ENCODE measurements at regions of chr11 and their contacts with region 1.

Region 1: DNA sequence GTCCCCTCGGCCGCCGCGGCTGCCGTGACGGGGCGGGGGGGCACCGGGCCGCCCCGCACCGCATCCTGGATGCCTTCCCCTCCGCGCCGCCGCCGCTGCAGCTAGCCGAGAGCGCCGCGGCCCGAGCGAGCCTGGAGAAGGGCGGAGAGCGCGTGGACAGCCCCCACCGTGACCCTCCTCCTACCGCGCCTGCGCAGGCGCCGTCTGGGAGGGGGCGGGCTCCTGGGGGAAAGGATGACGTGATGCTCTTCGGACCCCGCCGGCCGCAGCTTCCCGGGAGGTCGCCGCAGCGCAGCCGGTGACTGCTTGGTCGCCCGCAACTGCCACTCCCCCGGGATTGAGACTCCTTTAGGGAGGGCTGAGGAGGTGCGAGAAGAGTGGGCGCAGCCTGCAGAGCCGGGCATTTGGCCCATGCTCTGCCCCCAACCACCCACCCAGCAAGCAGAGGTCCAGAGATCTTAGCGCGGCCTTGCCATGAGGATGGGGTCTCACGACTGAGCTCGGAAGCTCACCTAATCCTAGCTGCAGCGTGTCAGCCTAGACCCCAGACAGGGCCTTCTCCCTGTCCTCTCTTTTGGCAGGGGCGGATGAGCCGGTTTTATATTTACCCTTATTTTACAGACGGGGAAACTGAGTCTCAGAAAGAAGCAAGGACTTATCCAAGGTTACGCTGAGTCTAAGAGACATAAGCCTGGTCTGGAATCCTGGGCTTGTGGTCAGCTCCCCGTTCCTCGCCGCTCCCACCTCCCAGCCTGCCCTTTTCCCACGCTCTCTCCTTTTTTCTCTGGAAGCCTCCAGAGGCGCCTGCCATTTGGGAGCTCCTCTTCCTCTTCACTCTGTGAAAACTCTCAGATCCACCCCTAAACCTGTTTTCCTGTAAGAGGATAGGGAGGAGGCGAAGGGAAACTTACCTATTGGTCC is at the start of gene DENND5A:
- DNase-seq: peak; percentile 71
- ATAC-seq: peak; percentile 37
- H3K4me3 Mint-ChIP-seq: peak within 1 kb of the TSS; percentile 87
- H3K27ac Mint-ChIP-seq: peak within 1 kb of the TSS; percentile 93
- H3K4me1 Mint-ChIP-seq: peaks cover 33% of the 10 kb centered on the region
- H3K27me3 Mint-ChIP-seq: peaks cover 6% of the 10 kb centered on the region
- total RNA-seq, gene DENND5A: 43.6 to 62.6 TPM

Region 2: DNA sequence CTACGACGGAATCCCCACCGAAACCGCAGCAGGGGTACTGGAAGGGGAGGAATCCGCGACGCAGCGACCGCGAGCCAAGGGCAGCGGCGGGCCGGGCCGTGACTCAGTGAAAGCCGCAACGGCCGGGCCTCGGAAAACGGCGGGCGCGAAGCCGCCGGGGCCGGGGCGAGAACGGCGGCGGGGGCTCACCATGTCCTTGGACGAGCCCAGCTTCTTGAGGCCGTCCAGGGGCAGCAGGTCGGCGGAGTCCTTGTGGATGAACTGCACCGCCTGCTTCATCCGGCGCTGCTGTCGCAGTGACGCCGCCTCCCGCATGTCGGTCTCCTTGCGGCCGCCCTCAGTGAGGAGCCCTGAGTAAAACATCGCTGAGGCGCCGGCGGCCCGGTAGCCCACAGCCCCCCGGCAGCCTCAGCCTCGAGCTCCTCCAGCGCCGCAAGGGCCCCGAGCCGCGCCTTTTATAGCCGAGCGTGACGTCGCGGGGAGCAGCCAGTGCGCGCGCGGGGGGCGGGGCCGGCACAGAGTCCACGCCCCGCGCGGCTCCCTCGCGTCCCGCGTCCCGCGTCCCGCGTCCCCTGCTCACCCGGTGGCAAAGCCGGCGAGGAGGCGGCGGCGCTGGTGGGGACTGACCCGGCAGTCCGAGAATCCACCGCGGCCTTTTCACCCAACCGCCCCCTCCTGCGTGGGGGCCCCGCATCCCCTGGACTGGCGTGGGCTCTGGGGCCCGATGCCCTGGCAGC is 261.7 kb before region 1 on chr11 and contains the start of gene NRIP3:
- CTCF ChIA-PET with region 1: no interaction called
- POLR2A ChIA-PET with region 1: no interaction called
- intact Hi-C with region 1: loop called in 1 of 2 experiments (anchors 1 kb)
- DNase-seq: peak; percentile 82
- ATAC-seq: peak; percentile 41
- H3K4me3 Mint-ChIP-seq: peak within 1 kb of the TSS; percentile 65
- H3K27ac Mint-ChIP-seq: peak within 1 kb of the TSS; percentile 38
- H3K4me1 Mint-ChIP-seq: peaks cover 27% of the 10 kb centered on the region
- H3K27me3 Mint-ChIP-seq: peaks cover 34% of the 10 kb centered on the region
- total RNA-seq, gene NRIP3: 2.1 to 2.2 TPM

Region 3: GRCh38 chr11:9170450-9170849 is 95.0 kb before region 1 on chr11:
- CTCF ChIA-PET with region 1: no interaction called
- POLR2A ChIA-PET with region 1: interaction called, 5 read pairs
- intact Hi-C with region 1: loop called in 1 of 2 experiments (anchors 5 kb)
- DNase-seq: no peak
- ATAC-seq: no peak
- H3K4me3 Mint-ChIP-seq: no peak overlapping the region
- H3K27ac Mint-ChIP-seq: no peak overlapping the region
- H3K4me1 Mint-ChIP-seq: peaks cover 13% of the 10 kb centered on the region
- H3K27me3 Mint-ChIP-seq: no peaks in the 10 kb centered on the region

Region 4: DNA sequence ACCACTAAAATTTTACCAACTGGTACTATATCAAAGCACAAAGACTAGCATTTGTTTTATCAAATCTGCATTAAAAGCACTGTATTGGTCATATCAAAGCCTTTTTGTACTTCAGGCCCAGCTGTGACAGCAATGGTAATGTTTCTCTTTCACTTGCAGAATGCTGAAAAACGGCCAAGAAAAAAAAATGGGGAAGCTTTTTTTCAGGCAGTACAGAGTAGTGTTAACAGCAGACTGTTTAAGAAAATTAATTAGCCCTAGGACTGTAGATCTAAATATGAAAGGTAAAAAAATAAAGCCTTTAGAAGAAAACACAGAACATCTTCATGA is 33.7 kb before region 1 on chr11:
- CTCF ChIA-PET with region 1: interaction called, 3 read pairs
- POLR2A ChIA-PET with region 1: interaction called, 4 read pairs
- intact Hi-C with region 1: loop called in 1 of 2 experiments (anchors 1 kb)
- DNase-seq: no peak
- ATAC-seq: peak; percentile 63
- H3K4me3 Mint-ChIP-seq: peak overlapping the region; percentile 63
- H3K27ac Mint-ChIP-seq: peak overlapping the region; percentile 65
- H3K4me1 Mint-ChIP-seq: peaks cover 50% of the 10 kb centered on the region
- H3K27me3 Mint-ChIP-seq: no peaks in the 10 kb centered on the region

Region 5: GRCh38 chr11:9280655-9281301 is 15.3 kb after region 1 on chr11:
- CTCF ChIA-PET with region 1: interaction called, 6 read pairs
- POLR2A ChIA-PET with region 1: interaction called, 4 read pairs
- intact Hi-C with region 1: loop called (anchors 1 kb)
- DNase-seq: peak; percentile 73
- ATAC-seq: peak; percentile 95
- H3K4me3 Mint-ChIP-seq: no peak overlapping the region
- H3K27ac Mint-ChIP-seq: no peak overlapping the region
- H3K4me1 Mint-ChIP-seq: peaks cover 14% of the 10 kb centered on the region
- H3K27me3 Mint-ChIP-seq: no peaks in the 10 kb centered on the region

Region 6: DNA sequence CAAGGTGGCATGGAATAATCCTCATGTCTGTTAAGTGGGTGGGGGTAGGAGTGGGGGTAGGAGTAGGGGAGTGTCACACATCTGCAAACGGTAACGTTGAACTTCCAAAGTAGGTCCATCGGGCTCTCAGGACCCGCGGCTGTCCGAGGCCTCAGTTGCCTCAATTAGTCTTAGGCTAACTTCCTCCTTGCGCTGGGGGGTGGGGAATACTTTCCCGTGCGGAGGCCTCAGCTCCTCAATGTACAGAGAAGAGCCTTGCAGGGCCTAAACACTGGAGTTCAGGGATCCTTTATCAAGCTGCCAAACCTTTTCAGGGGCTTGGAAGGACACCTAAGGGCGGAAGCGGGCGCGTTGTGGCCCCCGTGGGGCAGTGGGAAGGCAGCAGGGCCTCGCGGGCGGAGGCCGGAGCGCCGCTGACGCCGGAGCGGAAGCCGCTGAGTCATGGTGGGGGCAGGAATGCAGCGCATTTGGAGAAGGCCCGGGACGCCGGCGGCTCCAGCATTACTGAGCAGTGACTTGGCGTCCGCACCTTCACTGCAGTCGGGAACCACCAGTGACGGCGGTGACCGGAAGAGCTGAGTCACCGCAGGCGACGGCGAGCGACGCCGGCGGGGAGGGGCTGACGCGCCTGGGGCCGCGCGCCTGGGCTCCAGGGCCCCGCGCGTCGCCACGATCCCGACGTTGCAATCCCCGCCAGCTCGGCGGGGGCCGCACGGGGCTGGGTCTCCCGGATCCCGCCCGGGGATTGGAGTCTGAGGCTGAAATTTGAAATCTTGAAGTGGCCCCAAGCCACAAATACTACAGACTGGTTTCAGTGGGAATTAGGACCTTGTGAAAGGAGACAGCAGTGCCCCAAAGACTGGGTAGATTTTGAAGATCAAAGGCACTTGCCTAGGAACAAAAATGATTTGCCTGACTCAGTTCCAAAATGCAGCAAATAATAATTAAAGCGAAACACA is 98.8 kb after region 1 on chr11:
- CTCF ChIA-PET with region 1: interaction called, 3 read pairs
- POLR2A ChIA-PET with region 1: interaction called, 3 read pairs
- intact Hi-C with region 1: loop called (anchors 1 kb)
- DNase-seq: peak; percentile 92
- ATAC-seq: peak; percentile 88
- H3K4me3 Mint-ChIP-seq: peak overlapping the region; percentile 62
- H3K27ac Mint-ChIP-seq: peak overlapping the region; percentile 88
- H3K4me1 Mint-ChIP-seq: peaks cover 30% of the 10 kb centered on the region
- H3K27me3 Mint-ChIP-seq: no peaks in the 10 kb centered on the region

Region 7: GRCh38 chr11:9573052-9573774 is 307.7 kb after region 1 on chr11 and contains the start of gene WEE1:
- CTCF ChIA-PET with region 1: no interaction called
- POLR2A ChIA-PET with region 1: no interaction called
- intact Hi-C with region 1: loop called in 1 of 2 experiments (anchors 2 kb)
- DNase-seq: peak; percentile 99
- ATAC-seq: peak; percentile 94
- H3K4me3 Mint-ChIP-seq: peak within 1 kb of the TSS; percentile 94
- H3K27ac Mint-ChIP-seq: peak within 1 kb of the TSS; percentile 82
- H3K4me1 Mint-ChIP-seq: peaks cover 33% of the 10 kb centered on the region
- H3K27me3 Mint-ChIP-seq: peaks cover 3% of the 10 kb centered on the region
- total RNA-seq, gene WEE1: 44.8 to 46.5 TPM